ENCODE measurements at regions of chr1 and their contacts with region 1.

Region 1: GRCh38 chr1:111507411-111508201 is 4.2 kb upstream of the ADORA3 start:
- DNase-seq: peak; percentile 86
- ATAC-seq: peak; percentile 75

Region 2: GRCh38 chr1:111656086-111657017 is 148.7 kb after region 1 on chr1:
- intact Hi-C with region 1: loop called (anchors 5 kb)
- DNase-seq: no peak
- ATAC-seq: peak; percentile 66